Activated CD4-positive, alpha-beta memory T cell treated with anti-CD3 and anti-CD28 coated beads for 36 hours (primary cell): ENCODE measurements at regions of chr9 and their contacts with region 1.

Region 1: DNA sequence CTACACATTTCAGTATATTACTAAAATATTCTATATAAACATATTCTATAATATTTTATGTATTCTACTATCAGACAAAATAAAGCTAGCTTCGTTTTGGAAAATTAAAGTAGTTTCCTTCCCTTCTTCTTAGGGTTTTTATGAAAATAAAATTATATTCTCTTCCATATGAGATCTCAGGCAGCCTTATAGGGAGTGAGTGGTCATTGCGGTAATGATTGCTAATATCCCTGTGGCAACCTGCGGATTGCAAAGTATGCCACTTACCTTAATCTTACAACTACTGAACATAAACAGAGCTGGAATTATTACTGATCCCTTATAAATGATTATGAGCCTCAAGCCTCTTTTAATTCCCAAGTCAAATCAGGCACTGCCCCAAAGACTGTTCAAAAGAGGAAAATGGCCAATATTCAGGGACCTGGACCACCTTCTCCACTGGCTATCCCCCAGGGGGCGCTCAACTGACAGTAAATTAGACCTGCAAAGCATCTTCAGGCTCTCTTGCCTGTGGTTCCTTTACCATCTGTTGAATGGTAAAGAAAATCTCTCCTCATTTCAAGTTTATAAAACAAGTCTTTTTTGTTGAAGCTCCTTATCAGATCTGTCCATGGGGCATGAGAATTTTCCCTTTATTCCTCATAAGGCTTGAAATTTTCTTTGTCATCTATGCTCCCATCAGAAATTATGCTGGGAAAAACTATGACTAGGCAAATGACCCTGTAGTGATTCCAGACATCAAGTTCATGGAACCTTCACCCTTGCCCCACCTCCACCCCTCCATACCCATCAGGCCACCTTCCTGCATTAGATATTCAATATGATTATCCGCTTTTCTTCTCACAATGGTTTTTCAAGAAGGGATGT is 163.9 kb downstream of the CEMIP2 start:
- DNase-seq: peak; percentile 84
- H3K4me3 Mint-ChIP-seq: no peak overlapping the region
- H3K27ac Mint-ChIP-seq: no peak overlapping the region
- H3K4me1 Mint-ChIP-seq: no peaks in the 10 kb centered on the region
- H3K27me3 Mint-ChIP-seq: no peaks in the 10 kb centered on the region

Region 2: DNA sequence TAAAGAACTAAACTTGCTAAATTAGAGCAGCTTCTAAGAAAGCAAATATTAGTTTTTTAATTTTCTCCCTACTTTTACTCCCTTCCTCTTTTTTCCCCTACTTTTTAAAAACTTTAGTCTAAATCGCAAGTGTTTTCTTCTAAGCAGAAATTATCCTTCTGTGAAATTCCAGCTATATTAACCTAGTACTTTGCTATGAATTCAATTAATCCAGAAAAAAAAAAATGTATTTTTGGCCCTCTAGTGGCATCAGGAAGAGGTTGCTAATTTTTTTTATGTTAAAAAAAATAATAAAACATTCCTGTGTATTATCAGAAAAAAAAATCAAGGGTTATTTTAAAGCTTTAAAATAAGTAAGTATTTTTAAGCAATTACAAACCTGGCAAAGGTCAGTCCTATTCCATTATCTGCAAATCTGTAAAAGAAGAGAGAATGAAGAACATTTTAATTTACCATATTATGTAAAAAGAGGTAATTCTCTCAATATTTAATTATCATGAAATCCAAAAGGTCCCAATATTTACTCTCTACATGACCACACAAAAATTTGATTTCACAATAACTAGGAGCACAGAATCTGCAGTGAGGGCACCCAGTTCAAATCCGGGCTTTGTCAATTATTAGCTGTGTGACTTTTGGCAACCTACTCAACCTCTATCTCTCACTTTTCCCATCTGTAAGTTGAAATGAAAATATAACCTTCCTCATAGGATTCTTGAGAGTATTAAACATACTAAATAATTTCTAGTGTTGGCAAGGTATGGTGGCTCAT is 111.9 kb after region 1 on chr9:
- CTCF ChIA-PET with region 1: interaction called, 10 read pairs
- POLR2A ChIA-PET with region 1: no interaction called
- intact Hi-C with region 1: no loop called
- DNase-seq: no peak
- H3K4me3 Mint-ChIP-seq: no peak overlapping the region
- H3K27ac Mint-ChIP-seq: no peak overlapping the region
- H3K4me1 Mint-ChIP-seq: peaks cover 3% of the 10 kb centered on the region
- H3K27me3 Mint-ChIP-seq: no peaks in the 10 kb centered on the region

Region 3: GRCh38 chr9:72977670-72978069 is 1373.2 kb after region 1 on chr9:
- CTCF ChIA-PET with region 1: no interaction called
- POLR2A ChIA-PET with region 1: no interaction called
- intact Hi-C with region 1: no loop called
- DNase-seq: no peak
- H3K4me3 Mint-ChIP-seq: no peak overlapping the region
- H3K27ac Mint-ChIP-seq: no peak overlapping the region
- H3K4me1 Mint-ChIP-seq: no peaks in the 10 kb centered on the region
- H3K27me3 Mint-ChIP-seq: peaks cover 3% of the 10 kb centered on the region